IMR-90 (cell line): ENCODE measurements at regions of chr3 and their contacts with region 1.

Region 1: DNA sequence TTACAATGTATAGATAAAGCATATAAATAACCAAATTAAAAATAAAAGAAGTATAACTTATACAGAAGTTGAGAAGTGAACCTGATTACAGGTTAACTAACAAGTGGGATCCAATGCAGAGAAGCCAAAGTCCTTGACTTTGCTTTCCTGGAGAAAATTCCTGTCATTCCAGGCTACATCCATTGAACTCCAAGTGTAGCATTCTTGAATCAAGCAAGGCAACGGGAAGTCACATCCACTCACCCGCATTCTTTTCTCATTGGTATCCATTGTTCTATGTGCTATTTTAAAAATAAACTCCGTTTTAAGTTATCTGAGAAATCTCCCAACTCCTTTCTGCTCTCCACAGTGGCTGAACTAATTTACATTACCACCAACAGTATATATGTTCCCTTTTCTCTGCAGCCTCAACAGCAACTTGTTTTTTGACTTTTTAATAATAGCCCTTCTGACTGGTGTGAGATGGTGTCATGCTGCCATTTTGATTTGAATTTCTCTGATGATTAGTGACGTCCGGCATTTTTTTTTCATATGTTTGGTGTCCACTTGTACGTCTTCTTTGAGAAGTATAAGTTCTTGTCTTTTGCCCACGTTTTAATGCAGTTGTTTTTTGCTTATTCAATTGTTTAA is 534.3 kb downstream of the ROBO1 start:
- DNase-seq: no peak
- ATAC-seq: no peak
- H3K4me3 ChIP-seq: no peak overlapping the region
- H3K27ac ChIP-seq: no peak overlapping the region
- H3K4me1 ChIP-seq: no peaks in the 10 kb centered on the region
- H3K27me3 ChIP-seq: no peaks in the 10 kb centered on the region
- CTCF ChIP-seq: no peak
- POLR2A ChIP-seq: no peak
- RAD21 ChIP-seq: no peak

Region 2: DNA sequence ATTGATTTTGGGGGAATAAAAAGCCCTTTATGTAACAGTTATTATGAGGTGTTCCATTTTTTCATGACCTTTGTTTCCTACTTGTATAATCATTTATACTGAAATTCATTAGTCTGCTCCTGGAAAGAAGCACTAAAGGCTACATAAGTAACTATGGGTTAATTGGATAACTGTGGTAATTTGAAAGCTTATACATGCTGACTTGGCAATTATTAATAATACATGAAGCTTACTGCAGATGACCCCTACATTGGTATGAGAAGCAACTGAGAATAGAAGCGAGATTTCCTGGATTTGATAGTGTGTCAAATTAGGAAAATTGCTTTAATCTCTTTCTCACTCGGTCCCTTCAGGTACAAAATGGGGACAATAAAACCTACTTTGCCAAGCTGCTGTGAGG is 123.8 kb before region 1 on chr3:
- CTCF ChIA-PET with region 1: no interaction called
- POLR2A ChIA-PET with region 1: no interaction called
- dilution Hi-C with region 1: no loop called
- in situ Hi-C with region 1: no loop called
- intact Hi-C with region 1: loop called (anchors 10 kb)
- DNase-seq: no peak
- ATAC-seq: no peak
- H3K4me3 ChIP-seq: no peak overlapping the region
- H3K27ac ChIP-seq: no peak overlapping the region
- H3K4me1 ChIP-seq: no peaks in the 10 kb centered on the region; the same call in 1 of the 2 replicates
- H3K27me3 ChIP-seq: no peaks in the 10 kb centered on the region
- CTCF ChIP-seq: no peak
- POLR2A ChIP-seq: no peak
- RAD21 ChIP-seq: no peak